Tibial artery (tissue), 4 donors: ENCODE measurements at regions of chr6 and their contacts with region 1.

Region 1: GRCh38 chr6:4155848-4156466 is 20.6 kb upstream of the ECI2 start:
- DNase-seq: peak; percentile 81 to 82
- H3K4me3 ChIP-seq: no peak overlapping the region
- H3K27ac ChIP-seq: no peak overlapping the region
- H3K4me1 ChIP-seq: no peaks in the 10 kb centered on the region
- H3K27me3 ChIP-seq: peaks cover 0 to 3% of the 10 kb centered on the region in 2 donors
- CTCF ChIP-seq: peak; percentile 78 to 84

Region 2: DNA sequence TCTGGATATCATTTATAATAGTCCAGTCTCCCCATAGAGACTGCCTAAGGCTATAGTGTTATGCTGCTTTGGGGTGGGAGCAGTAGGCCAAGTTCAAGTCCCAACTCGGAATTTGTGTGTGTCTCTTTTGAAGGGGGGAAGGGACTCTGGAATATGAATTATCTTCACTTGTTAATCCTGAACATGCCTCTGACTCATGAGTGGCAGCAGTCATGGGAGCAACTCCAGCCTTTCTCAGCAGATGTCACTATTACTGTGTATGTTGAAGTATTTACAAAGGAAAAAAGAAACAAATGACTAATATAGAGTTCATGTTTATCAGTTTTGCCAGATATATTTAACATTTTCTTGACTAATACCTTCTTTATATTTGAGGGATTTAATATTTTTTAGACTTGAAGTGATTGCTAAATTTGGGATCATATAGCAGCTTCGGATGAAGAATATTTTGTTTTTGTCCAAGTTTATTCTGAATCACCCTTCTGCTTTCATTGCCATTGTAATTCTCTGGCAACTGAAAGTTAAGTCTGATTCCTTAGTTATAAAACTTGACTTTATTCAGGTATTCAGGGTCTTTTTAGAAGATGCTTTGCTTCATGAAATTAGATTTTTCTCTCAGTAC is 100.4 kb before region 1 on chr6:
- intact Hi-C with region 1: loop called (anchors 2 kb)
- DNase-seq: peak in 1 of 2 donors; percentile 44
- H3K4me3 ChIP-seq: no peak overlapping the region
- H3K27ac ChIP-seq: peak overlapping the region; percentile 48 to 51
- H3K4me1 ChIP-seq: peaks cover 0 to 11% (median 2%) of the 10 kb centered on the region in 4 donors
- H3K27me3 ChIP-seq: no peaks in the 10 kb centered on the region
- CTCF ChIP-seq: peak; percentile 37 to 57